ENCODE measurements at regions of chr12 and their contacts with region 1.

Region 1: DNA sequence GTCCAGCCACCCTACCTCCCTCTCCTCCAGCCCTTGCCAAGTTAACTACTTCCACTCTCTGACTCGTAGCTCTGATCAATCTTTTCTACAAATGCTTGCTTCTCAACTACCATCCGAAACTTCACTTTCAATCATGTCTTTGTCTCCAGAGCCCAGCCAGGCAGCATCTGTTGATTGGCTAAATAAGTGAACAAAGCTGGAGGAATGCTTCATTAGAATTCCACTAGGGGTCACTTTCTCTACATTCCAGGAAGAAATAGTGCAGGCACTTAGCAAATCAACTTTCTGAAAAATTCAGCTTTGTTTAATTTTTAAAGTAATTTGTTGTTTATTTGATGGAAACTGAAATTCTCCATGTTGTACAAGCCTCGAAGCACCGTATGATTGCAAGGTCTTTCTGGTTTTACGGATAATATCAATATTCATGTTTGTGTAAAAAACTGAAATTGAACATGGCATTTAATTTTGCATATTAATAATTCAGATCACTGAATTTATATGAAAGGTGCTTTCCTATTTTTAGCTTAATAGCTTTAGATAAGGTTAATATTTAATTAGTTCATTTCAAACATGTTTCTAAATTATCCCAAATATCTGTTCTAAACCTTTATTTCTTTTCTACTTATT is 32.4 kb upstream of the HELB start:
- DNase-seq: peak in 22 of 42 donors; percentile 3 to 60 (median 20)

Region 2: DNA sequence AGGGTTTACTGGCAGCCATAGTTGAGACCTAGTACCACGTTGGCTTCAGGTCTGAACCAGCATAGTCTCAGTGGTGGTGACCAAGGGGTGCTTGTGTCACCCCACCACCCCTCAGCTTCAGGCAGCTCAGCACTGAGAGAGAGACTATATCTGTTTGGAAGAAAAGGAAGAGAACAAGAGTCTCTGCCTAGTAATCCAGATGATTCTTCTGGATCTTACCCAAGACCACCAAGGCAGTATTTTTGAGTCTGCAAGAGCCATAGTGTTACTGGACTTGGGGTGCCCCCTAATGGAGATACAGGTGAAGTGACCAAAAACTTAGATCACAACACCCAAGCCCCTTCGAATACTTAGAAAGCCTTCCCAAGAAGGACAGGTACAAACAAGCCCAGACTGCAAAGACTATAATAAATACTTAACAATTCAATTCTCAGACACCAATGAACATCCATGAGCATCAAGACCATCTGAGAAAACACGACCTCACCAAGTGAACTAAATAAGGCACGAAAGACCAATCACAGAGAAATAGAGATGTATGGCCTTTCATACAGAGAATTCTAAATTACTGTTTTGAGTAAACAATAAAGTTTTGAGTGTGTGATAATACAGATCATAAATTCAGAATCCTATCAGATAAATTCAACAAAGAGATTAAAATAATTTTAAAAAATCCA is 139.5 kb after region 1 on chr12:
- intact Hi-C with region 1: loop called (anchors 10 kb)
- DNase-seq: peak in 17 of 42 donors; percentile 4 to 64 (median 24)